Left cardiac atrium (tissue), 4 donors: ENCODE measurements at regions of chr14 and their contacts with region 1.

Region 1: GRCh38 chr14:57486767-57487379 is 6.8 kb downstream of the CCDC198 start:
- DNase-seq: no peak
- ATAC-seq: peak; percentile 57 to 77

Region 2: GRCh38 chr14:57871459-57872080 is 384.7 kb after region 1 on chr14:
- intact Hi-C with region 1: loop called in 1 of 2 experiments (anchors 10 kb)
- DNase-seq: no peak
- ATAC-seq: peak in 1 of 2 donors; percentile 34

Region 3: GRCh38 chr14:58026967-58027366 is 540.1 kb after region 1 on chr14:
- intact Hi-C with region 1: no loop called
- DNase-seq: no peak
- ATAC-seq: no peak